ENCODE measurements at regions of chr4 and their contacts with region 1.

Region 1: DNA sequence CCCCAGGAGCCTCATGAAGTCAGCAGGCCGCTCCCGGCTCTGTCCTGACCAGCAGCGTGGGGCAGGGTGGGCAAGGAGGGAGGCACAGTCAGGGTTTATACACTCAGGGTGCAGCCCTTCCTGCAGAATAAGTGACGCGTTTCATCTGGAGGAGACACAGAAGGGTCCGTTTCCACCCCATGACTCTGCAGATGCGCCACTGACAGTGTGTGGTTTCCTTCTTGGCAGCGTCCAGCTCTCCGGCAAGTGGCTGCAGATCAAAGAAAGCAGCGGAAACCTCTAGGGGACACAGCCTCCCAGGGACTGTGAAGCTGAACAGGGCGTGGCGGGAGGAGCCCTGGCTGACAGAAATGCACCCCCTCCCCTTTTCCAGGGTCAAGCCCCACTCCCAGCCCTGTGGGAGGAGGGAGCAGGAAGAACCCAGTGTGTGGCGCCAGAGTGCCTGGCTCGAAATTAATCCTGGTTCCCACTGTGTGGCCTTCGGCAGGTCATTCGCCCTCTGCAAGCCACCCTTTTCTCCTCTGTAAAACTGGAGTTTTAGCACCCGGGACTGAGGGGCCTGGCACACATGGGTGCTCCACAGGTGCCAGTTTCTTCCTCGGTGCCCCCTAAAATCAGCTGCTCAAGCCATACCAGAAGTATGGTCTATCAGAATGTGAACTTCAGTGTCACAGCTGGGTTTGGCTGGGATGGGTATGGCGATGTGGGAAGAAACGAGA is 17.3 kb upstream of the TBC1D14 start:
- DNase-seq: peak; percentile 79
- ATAC-seq: peak; percentile 49
- H3K4me3 ChIP-seq: no peak overlapping the region
- H3K27ac ChIP-seq: peak overlapping the region; percentile 99; the same call in 1 of the 2 replicates
- H3K4me1 ChIP-seq: peaks cover 22% of the 10 kb centered on the region
- H3K27me3 ChIP-seq: no peaks in the 10 kb centered on the region
- CTCF ChIP-seq: peak; percentile 31; the same call in 1 of the 2 replicates
- POLR2A ChIP-seq: no peak
- RAD21 ChIP-seq: peak; percentile 29; the same call in 1 of the 2 replicates

Region 2: DNA sequence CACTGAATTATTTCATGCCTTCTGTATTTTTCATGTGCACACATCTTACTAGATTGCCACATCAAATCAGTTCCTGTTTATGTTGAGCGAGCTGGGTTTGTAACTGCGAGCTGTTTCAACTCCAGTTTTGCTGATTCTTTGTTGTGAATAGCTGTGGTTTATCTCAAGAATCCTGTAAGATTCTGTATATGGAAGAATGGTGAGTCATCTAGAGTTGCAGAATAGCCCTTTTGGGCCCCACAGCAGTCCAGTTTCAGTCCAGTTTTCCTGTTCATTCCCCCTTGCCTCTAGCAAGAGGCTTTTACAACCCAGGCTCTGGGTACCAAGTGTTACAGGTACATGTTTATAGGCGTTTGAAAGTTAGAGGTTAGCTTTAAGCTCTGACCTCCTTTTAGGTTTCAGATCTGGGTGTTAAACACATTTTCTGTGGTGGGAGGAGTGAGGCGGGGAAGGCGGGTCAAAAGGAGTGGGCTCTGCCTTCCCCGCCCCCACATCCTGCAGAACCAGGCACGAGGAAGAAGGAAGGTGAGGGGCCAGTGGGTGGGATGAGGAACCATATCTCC is 50.0 kb after region 1 on chr4:
- CTCF ChIA-PET with region 1: no interaction called
- POLR2A ChIA-PET with region 1: no interaction called
- dilution Hi-C with region 1: no loop called
- in situ Hi-C with region 1: no loop called
- intact Hi-C with region 1: loop called (anchors 1 kb)
- DNase-seq: peak; percentile 98
- ATAC-seq: peak; percentile 93
- H3K4me3 ChIP-seq: peak overlapping the region; percentile 17; the same call in 1 of the 2 replicates
- H3K27ac ChIP-seq: peak overlapping the region; percentile 90
- H3K4me1 ChIP-seq: peaks cover 28% of the 10 kb centered on the region
- H3K27me3 ChIP-seq: no peaks in the 10 kb centered on the region
- CTCF ChIP-seq: no peak
- POLR2A ChIP-seq: no peak
- RAD21 ChIP-seq: peak; percentile 26

Region 3: DNA sequence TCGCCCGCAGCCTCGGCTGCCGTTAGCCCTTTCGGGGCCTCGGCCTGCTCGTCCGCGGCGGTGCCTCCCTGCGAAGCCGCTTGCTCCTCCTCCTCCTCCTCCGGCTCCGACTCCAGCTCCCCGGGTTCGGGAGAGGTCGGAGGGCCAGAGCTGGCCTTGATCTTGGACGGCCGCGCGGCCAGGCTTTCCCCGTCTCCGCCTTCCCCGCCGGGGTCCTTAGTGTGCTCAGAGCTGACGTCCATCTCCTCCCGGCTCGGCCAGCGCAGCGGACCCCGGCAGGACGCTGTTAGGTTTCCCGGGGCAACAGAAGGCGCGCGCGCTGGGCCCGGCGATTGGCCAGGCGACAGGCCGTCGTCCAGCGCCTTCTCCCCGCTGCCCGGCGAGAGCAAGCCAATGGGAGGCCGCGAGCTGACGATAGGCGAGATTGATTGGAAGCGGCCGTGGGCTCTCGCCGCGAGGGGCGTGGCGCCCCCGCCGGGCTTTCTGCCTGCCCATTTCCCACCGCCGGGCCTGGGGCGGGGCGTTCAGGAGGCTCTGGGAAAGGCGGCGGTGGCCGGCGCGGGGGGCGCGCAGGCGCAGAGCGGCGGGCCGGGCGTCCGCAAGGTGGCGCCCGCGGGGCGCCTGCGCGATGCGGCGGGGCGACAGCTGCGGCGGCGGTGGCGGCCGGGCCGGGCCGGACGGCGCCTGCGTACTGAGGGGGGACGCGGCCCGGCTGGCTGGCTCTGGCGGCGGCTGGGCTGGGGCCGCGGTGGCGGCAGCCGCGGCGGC is 150.5 kb after region 1 on chr4 and contains the start of gene TADA2B:
- CTCF ChIA-PET with region 1: no interaction called
- POLR2A ChIA-PET with region 1: no interaction called
- dilution Hi-C with region 1: no loop called
- in situ Hi-C with region 1: no loop called
- intact Hi-C with region 1: no loop called
- DNase-seq: peak; percentile 97
- ATAC-seq: peak; percentile 89
- H3K4me3 ChIP-seq: peak within 1 kb of the TSS; percentile 79
- H3K27ac ChIP-seq: peak within 1 kb of the TSS; percentile 74
- H3K4me1 ChIP-seq: peaks cover 21% of the 10 kb centered on the region
- H3K27me3 ChIP-seq: no peaks in the 10 kb centered on the region
- CTCF ChIP-seq: peak; percentile 65
- POLR2A ChIP-seq: peak; percentile 67
- RAD21 ChIP-seq: peak; percentile 37; the same call in 1 of the 2 replicates
- total RNA-seq, gene TADA2B: 6.1 and 8.1 TPM in 2 replicates

Region 4: GRCh38 chr4:8891646-8892555 is 1999.6 kb after region 1 on chr4:
- CTCF ChIA-PET with region 1: no interaction called
- POLR2A ChIA-PET with region 1: no interaction called
- dilution Hi-C with region 1: no loop called
- in situ Hi-C with region 1: no loop called
- intact Hi-C with region 1: no loop called
- DNase-seq: no peak
- ATAC-seq: no peak
- H3K4me3 ChIP-seq: no peak overlapping the region
- H3K27ac ChIP-seq: no peak overlapping the region
- H3K4me1 ChIP-seq: no peaks in the 10 kb centered on the region
- H3K27me3 ChIP-seq: peaks cover 45% of the 10 kb centered on the region
- CTCF ChIP-seq: no peak
- POLR2A ChIP-seq: no peak
- RAD21 ChIP-seq: no peak